ENCODE measurements at regions of chr12 and their contacts with region 1.

Region 1: DNA sequence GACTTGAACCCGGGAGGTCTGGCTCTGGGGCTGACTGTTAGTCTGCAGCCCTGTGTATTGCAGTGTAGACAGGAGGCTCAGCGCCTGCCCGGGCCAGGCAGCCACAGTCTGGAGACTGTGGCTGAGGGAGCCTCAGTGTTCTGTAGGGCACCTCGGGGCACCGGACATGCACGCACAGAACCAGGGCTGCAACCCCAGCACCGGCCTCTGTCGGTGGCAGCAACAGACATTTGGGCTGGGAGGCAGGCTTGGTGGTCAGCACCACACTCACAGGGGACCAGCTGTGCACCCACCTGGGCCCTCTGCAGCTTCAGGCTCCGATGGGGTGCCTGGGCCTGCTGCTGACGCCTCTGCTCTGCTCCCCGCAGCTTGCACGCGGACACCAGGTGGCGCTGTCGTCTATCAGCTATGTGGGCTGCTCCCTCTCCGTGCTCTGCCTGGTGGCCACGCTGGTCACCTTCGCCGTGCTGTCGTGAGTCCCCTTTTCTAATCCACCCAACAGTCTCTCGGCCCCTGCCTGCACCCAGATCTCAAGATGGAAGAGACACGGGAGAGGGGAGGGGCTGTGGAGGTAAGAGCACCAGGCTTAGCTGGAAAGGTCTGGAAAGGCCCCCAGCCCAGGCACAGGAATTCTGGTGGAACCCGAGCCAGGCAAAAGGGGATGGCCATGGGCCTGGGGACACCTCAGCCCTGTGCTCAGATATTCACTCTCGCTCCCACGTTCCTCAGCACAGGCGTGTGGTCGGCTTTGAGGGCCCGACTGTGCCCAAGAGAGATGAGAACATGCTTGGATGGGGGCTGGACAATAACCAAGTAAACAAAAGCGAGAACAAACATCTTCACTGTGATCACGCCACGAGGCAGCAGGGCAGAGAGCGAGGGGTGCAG is 151.0 kb downstream of the ADGRD1 start:
- DNase-seq: peak; percentile 92
- H3K4me3 ChIP-seq: peak overlapping the region in 1 of 2 experiments; percentile 37; a peak in 1 of 4 replicates
- H3K27ac ChIP-seq: no peak overlapping the region
- H3K4me1 ChIP-seq: peaks cover 0 to 3% of the 10 kb centered on the region in 2 experiments; a peak in 1 of 4 replicates
- H3K27me3 ChIP-seq: no peaks in the 10 kb centered on the region
- CTCF ChIP-seq: peak; percentile 27
- EP300 ChIP-seq: no peak
- RAD21 ChIP-seq: peak; percentile 89

Region 2: GRCh38 chr12:130916251-130916911 is 188.3 kb before region 1 on chr12:
- CTCF ChIA-PET with region 1: interaction called, 68 read pairs
- POLR2A ChIA-PET with region 1: no interaction called
- DNase-seq: peak; percentile 82
- H3K4me3 ChIP-seq: peak overlapping the region in 1 of 2 experiments; percentile 32; a peak in 1 of 4 replicates
- H3K27ac ChIP-seq: no peak overlapping the region
- H3K4me1 ChIP-seq: peaks cover 0 to 4% of the 10 kb centered on the region in 2 experiments; a peak in 1 of 4 replicates
- H3K27me3 ChIP-seq: no peaks in the 10 kb centered on the region
- CTCF ChIP-seq: peak; percentile 31
- EP300 ChIP-seq: no peak
- RAD21 ChIP-seq: peak; percentile 96

Region 3: DNA sequence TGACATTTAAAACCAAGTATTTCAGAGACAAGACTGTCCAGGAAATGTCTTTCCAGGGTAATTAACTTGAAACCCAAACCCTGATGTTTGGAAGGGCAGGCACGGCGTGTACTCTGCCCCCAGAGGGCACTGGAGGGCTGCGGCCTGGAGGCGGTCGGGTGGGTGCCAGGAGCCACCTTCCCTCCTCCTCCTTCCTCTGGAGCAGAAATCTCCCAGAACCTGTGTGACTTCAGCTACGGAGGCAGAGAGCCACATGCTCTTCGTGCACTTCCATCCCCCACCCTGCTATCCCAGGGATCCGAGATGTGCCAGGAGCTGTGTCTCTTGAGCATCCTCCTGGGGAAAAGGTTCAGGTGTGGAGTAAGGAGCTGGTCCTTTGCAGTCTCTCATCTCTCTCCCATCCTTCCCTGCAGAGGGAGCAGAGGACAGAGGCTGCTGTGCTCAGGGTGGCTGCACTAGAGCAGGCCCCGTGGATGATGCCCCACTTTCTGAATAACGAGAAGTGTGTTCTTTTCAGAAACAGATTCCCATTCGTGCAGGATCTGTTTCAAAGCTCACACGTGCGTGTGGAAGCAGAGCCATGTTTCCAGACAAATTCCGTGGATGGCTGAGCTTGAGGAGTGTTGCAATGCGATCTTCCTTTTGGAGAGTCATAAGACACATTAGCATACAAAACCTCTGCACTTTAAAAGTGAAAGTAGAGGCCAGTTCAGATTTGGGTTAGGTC is 11.8 kb after region 1 on chr12:
- CTCF ChIA-PET with region 1: interaction called, 83 read pairs
- POLR2A ChIA-PET with region 1: no interaction called
- DNase-seq: peak; percentile 66
- H3K4me3 ChIP-seq: no peak overlapping the region
- H3K27ac ChIP-seq: no peak overlapping the region
- H3K4me1 ChIP-seq: peaks cover 0 to 29% of the 10 kb centered on the region in 2 experiments; a peak in 2 of 4 replicates
- H3K27me3 ChIP-seq: no peaks in the 10 kb centered on the region
- CTCF ChIP-seq: no peak
- EP300 ChIP-seq: no peak
- RAD21 ChIP-seq: peak; percentile 53

Region 4: DNA sequence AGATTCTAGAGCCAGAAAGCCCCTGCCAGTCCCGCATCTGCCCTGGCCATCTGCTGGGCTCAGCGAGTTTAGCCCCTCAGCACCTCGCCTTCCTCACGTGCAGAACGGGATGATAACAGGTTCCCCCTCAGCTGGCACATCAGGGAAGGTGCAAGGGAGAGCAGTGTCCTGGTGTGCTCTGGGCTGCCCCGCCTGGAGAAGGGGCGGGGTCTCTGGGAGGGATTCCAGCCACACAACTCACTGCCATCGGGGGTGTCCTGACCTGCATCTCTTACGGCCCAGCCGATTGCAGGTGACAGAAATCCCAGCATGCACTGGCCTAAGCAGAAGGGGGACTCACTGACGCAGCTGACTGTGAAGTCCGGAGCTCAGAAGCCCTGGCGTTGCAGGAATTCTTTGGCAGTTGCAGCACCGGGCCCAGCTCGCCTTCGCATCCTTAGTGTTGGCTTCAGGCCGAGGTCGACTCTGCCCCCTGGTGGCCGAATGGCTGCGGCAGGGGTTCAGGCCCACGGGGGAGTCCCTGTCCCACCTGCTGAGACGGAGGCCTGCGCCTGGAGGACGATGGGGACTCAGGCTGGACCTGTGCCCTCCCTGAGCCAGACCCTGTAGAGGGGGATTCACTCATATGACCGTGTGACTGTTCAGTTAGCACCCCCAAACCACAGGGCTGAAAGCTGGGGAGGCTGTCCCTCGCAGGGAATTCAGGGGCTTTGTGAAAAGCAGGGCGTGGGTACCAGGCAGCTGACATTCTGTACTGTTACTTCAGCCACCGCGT is 27.6 kb after region 1 on chr12:
- CTCF ChIA-PET with region 1: interaction called, 164 read pairs
- POLR2A ChIA-PET with region 1: no interaction called
- DNase-seq: peak; percentile 89
- H3K4me3 ChIP-seq: peak overlapping the region in 1 of 2 experiments; percentile 50; a peak in 1 of 4 replicates
- H3K27ac ChIP-seq: no peak overlapping the region
- H3K4me1 ChIP-seq: peaks cover 0 to 46% of the 10 kb centered on the region in 2 experiments; a peak in 1 of 4 replicates
- H3K27me3 ChIP-seq: no peaks in the 10 kb centered on the region
- CTCF ChIP-seq: no peak
- EP300 ChIP-seq: no peak
- RAD21 ChIP-seq: peak; percentile 65

Region 5: DNA sequence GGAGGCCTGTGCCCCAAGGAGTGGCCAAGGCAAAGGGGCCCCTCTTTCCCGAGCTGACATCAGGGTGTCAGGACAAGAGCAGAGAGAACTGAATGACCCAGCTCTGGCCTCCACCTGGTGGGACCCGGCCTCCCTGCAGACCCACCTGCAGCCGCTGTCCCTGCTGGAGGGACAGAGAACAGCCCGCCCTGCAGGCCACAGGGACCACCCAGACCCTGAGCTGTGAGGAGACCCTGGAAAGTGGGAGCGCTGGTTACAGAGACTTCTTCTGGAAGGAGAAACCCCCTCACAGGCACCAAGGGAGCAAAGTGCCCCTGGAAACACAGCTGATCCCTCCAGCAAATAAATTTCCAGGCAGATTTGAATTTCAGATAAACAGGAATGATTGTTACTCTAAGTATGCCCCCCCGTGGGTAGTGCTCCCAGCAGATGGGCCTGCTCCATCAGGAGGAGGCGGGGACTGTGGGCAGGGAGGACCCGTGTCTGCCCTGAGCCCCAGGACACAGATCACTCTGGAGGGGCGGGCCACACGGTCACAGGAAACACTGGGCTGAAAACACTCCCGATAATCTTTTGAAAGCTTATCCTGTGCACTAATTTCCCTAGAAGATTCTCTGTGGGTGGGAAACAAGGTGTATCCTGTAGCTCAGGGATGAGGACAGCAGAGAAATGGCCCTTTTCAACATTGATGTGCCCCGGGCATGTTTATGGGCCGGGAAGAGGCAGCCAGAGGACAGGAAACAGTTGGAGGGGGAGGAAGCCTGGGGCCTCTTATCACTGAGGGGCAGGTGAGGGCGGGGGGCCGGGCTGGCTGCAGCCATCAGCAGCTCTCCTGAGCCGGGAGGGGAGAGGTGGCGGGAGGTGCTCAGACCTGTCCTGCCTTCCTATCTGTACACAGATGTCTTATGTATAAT is 125.0 kb after region 1 on chr12:
- CTCF ChIA-PET with region 1: interaction called, 20 read pairs
- POLR2A ChIA-PET with region 1: no interaction called
- DNase-seq: peak; percentile 92
- H3K4me3 ChIP-seq: no peak overlapping the region
- H3K27ac ChIP-seq: peak overlapping the region in 1 of 2 experiments; percentile 78; a peak in 2 of 4 replicates
- H3K4me1 ChIP-seq: peaks cover 0 to 45% of the 10 kb centered on the region in 2 experiments; a peak in 1 of 4 replicates
- H3K27me3 ChIP-seq: no peaks in the 10 kb centered on the region
- CTCF ChIP-seq: no peak
- EP300 ChIP-seq: peak in 1 of 2 experiments; percentile 54; a peak in 1 of 4 replicates
- RAD21 ChIP-seq: no peak

Region 6: GRCh38 chr12:131420867-131421447 is 316.2 kb after region 1 on chr12:
- CTCF ChIA-PET with region 1: no interaction called
- POLR2A ChIA-PET with region 1: no interaction called
- DNase-seq: no peak
- H3K4me3 ChIP-seq: no peak overlapping the region
- H3K27ac ChIP-seq: no peak overlapping the region
- H3K4me1 ChIP-seq: peaks cover 0 to 8% of the 10 kb centered on the region in 2 experiments; a peak in 1 of 4 replicates
- H3K27me3 ChIP-seq: no peaks in the 10 kb centered on the region
- CTCF ChIP-seq: no peak
- EP300 ChIP-seq: no peak
- RAD21 ChIP-seq: no peak

Region 7: GRCh38 chr12:131454418-131455217 is 349.9 kb after region 1 on chr12:
- CTCF ChIA-PET with region 1: interaction called, 87 read pairs
- POLR2A ChIA-PET with region 1: no interaction called
- DNase-seq: peak; percentile 90
- H3K4me3 ChIP-seq: no peak overlapping the region
- H3K27ac ChIP-seq: no peak overlapping the region
- H3K4me1 ChIP-seq: peaks cover 0 to 4% of the 10 kb centered on the region in 2 experiments; a peak in 1 of 4 replicates
- H3K27me3 ChIP-seq: no peaks in the 10 kb centered on the region
- CTCF ChIP-seq: no peak
- EP300 ChIP-seq: no peak
- RAD21 ChIP-seq: peak; percentile 80

Measured in SK-N-SH (cell line).